A673 (cell line): ENCODE measurements at regions of chr5 and their contacts with region 1.

Region 1: GRCh38 chr5:86407711-86408110 is 210.0 kb upstream of the COX7C start:
- DNase-seq: peak; percentile 89
- H3K4me3 ChIP-seq: peak overlapping the region; percentile 22
- H3K27ac ChIP-seq: peak overlapping the region; percentile 98
- H3K4me1 ChIP-seq: peaks cover 50% of the 10 kb centered on the region
- H3K27me3 ChIP-seq: no peaks in the 10 kb centered on the region
- CTCF ChIP-seq: no peak

Region 2: GRCh38 chr5:85320500-85320899 is 1087.2 kb before region 1 on chr5:
- CTCF ChIA-PET with region 1: no interaction called
- POLR2A ChIA-PET with region 1: no interaction called
- intact Hi-C with region 1: loop called (anchors 5 kb)
- DNase-seq: no peak
- H3K4me3 ChIP-seq: no peak overlapping the region
- H3K27ac ChIP-seq: no peak overlapping the region
- H3K4me1 ChIP-seq: peaks cover 15% of the 10 kb centered on the region
- H3K27me3 ChIP-seq: no peaks in the 10 kb centered on the region
- CTCF ChIP-seq: no peak

Region 3: DNA sequence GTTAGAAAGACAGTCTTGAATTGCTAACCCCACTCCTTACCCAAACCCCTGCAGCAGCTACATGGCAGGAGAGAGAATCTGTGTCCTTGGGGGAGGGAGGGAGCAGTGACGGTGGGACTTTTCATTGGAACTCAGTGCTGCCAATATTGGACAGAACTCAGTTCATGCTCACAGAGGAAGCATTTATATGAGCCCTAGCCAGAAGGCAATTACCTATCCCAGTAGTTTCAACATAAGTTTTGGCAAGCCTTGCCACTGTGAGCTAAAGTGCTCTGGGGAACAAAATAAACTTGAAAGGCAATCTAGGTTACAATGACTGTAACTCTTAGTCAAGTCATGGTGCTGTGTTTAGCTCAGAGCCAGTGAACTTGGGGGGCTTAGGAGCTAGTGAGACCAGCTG is 803.3 kb before region 1 on chr5:
- CTCF ChIA-PET with region 1: no interaction called
- POLR2A ChIA-PET with region 1: no interaction called
- intact Hi-C with region 1: loop called (anchors 2 kb)
- DNase-seq: no peak
- H3K4me3 ChIP-seq: no peak overlapping the region
- H3K27ac ChIP-seq: no peak overlapping the region
- H3K4me1 ChIP-seq: peaks cover 4% of the 10 kb centered on the region
- H3K27me3 ChIP-seq: no peaks in the 10 kb centered on the region
- CTCF ChIP-seq: no peak

Region 4: DNA sequence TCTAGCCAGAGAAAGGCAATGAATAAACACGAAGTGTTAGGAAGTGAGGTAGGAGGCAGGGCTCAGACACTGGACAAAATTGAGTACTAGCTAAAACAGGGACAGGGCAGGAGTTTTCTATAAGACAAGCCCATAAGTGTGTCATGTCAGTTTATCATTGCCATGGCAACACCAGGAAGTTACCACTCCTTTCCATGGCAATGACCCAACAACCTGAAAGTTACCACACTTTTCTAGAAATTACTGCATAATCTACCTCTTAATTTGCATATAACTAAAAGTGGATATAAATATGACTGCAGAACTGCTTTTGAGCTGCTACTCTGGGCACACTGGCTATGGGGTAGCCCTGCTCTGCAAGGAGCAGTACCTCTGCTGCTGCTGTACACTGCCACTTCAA is 232.5 kb before region 1 on chr5:
- CTCF ChIA-PET with region 1: no interaction called
- POLR2A ChIA-PET with region 1: no interaction called
- intact Hi-C with region 1: no loop called
- DNase-seq: peak; percentile 7
- H3K4me3 ChIP-seq: no peak overlapping the region
- H3K27ac ChIP-seq: no peak overlapping the region
- H3K4me1 ChIP-seq: no peaks in the 10 kb centered on the region
- H3K27me3 ChIP-seq: no peaks in the 10 kb centered on the region
- CTCF ChIP-seq: no peak

Region 5: GRCh38 chr5:86679529-86679928 is 271.8 kb after region 1 on chr5:
- CTCF ChIA-PET with region 1: no interaction called
- POLR2A ChIA-PET with region 1: no interaction called
- intact Hi-C with region 1: loop called (anchors 1 kb)
- DNase-seq: peak; percentile 80
- H3K4me3 ChIP-seq: no peak overlapping the region
- H3K27ac ChIP-seq: no peak overlapping the region
- H3K4me1 ChIP-seq: peaks cover 16% of the 10 kb centered on the region
- H3K27me3 ChIP-seq: no peaks in the 10 kb centered on the region
- CTCF ChIP-seq: peak; percentile 78